A549 (cell line): ENCODE measurements at regions of chr2 and their contacts with region 1.

Region 1: DNA sequence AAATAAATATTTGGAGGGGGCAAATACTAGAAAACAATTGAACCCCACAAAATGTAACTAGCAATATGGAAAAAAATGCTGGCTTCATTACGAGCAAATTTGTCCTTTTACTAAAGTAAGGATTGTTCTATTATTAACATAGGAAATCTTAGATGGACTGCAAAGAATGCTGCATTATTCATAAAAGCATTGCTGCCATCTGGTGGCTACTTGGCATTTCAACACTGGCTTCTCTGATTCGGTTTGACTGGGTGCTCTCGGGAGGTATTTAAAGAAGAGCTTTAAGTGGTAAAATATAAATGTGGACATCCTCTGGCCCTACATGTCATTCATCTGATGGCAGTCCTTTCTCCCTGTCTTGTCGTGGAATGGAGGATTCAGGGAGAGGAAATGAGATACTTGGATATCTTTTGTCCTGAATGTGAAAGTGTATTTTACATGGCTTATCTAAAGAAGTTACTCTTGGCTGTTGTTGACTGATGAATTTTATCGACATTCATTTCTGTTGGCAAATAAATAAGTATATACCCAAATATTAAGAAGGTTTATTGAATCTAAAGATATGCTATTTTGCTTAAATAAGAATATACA is 130.2 kb downstream of the ARHGAP15 start:
- DNase-seq: peak; percentile 13 to 68
- ATAC-seq: peak; percentile 82 to 94
- H3K4me3 ChIP-seq: no peak overlapping the region
- H3K27ac ChIP-seq: no peak overlapping the region
- H3K4me1 ChIP-seq: no peaks in the 10 kb centered on the region
- CTCF ChIP-seq: peak; percentile 86
- EP300 ChIP-seq: no peak
- POLR2A ChIP-seq: no peak
- RAD21 ChIP-seq: peak; percentile 74 to 77

Region 2: DNA sequence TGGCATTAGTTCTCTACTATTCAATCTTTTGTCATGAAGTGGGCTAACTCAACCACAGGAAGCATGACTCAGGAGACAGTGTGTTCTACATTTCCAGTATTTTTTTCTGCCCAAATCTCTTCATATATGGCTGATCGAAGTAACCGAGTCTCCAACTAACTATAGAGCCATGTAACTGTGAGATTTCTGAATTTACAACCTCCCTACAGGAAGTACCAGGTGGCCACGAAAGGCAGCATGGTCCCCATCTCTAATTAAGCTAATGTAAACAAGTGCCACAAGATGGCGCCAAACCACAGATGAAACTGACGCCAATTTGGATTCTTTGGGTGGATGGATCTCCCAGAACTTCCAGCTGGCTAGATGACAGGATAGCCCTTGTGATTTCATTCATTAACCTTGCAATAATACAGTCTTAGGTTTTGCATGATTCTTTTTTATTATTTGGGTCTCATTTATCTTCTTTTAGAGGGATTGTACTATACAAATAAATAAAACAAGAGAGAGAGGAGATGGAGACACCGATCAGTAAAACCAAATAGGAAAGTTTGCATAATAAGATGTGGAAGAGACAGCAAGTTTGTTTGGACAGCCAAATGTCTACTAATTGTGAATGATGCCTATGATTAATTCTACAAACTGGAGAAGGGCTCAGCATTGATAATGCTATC is 148.6 kb before region 1 on chr2:
- CTCF ChIA-PET with region 1: interaction called, 11 read pairs
- POLR2A ChIA-PET with region 1: no interaction called
- DNase-seq: peak; percentile 13 to 66
- ATAC-seq: peak; percentile 74 to 92
- H3K4me3 ChIP-seq: no peak overlapping the region
- H3K27ac ChIP-seq: no peak overlapping the region
- H3K4me1 ChIP-seq: no peaks in the 10 kb centered on the region
- CTCF ChIP-seq: peak; percentile 80
- EP300 ChIP-seq: no peak
- POLR2A ChIP-seq: no peak
- RAD21 ChIP-seq: peak; percentile 71 to 80

Region 3: DNA sequence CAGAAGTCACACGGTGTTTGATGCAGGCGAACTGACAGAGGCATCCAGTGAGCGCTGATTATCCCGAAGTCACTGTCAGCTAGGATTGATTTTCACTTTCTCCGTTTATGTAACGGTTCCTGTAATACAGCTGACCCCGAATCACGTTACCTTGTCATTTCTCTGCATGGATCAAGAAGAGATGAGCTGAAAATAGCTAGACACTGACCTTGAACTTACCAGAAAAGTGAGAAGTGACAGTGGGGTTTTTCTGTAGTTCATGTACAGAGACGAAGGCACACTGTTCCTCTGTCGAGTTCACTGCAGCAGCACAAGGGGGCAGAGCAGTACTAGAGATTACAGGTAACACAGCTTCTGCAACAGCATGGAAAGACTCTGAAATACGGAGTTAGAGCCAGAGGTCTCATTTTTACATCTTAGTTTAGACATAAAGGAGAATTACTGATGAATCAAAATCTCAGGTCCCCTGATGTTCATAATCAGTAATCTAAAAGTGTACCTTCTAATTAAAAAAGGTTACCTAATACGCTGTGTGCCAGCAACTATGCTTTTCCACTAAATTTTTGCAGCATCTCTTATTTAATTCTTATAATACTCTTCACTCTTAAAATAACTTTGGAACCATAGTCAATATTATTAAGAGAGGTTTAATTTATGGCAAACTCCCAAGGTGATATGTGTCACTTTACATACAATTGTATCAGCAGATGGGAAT is 97.2 kb before region 1 on chr2:
- CTCF ChIA-PET with region 1: interaction called, 12 read pairs
- POLR2A ChIA-PET with region 1: no interaction called
- DNase-seq: peak in 1 of 2 experiments; percentile 58
- ATAC-seq: peak; percentile 98 to 99
- H3K4me3 ChIP-seq: no peak overlapping the region
- H3K27ac ChIP-seq: no peak overlapping the region
- H3K4me1 ChIP-seq: no peaks in the 10 kb centered on the region
- CTCF ChIP-seq: peak; percentile 60
- EP300 ChIP-seq: no peak
- POLR2A ChIP-seq: no peak
- RAD21 ChIP-seq: peak; percentile 63 to 68

Region 4: DNA sequence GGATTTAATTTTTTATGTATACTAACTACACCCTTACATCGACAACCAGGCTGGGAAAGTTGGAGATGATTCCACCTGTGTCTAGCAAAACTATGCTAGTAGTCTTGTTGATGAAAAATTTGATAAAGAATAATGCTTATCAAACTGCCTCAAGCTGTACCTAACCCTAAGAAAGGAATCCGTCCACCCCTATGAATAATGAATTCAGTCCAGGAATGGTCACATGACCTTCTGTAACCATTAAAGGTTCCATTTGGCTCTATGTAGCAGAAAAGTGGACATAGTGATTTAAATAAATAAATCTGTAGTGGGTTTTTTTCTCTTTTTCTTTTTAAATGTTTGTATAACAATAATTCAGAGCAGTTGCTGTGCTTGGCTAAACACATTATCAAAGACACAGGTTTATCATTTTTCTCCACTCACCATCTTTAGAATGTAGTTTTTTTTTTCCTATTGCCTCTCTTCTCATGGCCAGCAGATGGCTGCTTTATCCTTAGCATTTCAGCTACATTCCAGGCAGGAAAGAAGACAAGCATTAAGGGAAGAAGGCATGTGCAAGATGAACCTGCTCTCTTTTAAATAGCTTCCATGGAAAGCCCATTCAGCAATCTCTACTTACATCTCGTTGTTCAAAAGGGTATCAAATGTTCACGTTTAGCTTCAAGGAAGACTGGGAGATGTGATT is 87.8 kb before region 1 on chr2:
- CTCF ChIA-PET with region 1: interaction called, 15 read pairs
- POLR2A ChIA-PET with region 1: no interaction called
- DNase-seq: peak in 1 of 2 experiments; percentile 7
- ATAC-seq: peak; percentile 73 to 76; a peak in 5 of 6 replicates
- H3K4me3 ChIP-seq: no peak overlapping the region
- H3K27ac ChIP-seq: no peak overlapping the region
- H3K4me1 ChIP-seq: no peaks in the 10 kb centered on the region
- CTCF ChIP-seq: 0 out of 3 replicates have a peak, but pooled peaks have one; percentile 2
- EP300 ChIP-seq: no peak
- POLR2A ChIP-seq: no peak
- RAD21 ChIP-seq: peak in 1 of 2 experiments; percentile 41; a peak in 2 of 5 replicates

Region 5: DNA sequence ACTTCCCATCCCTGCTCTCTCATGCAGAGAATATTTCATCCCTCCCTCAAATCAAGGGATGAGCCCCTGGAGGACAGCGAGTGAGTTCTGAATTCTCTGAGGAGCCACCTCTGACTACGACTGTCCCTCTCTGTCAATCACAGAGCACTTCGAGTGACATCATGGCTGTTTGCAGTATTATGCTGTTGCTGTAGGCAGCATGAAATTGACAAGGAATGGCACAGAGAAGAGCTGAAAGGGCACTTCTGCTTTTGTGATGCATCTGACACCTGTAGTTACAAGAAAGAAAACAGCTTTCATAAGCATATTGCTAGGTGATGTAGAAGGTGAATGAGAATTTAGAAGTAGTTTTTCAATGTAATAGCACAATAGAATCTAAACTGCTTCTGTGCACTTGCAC is 36.6 kb after region 1 on chr2:
- CTCF ChIA-PET with region 1: no interaction called
- POLR2A ChIA-PET with region 1: no interaction called
- DNase-seq: no peak
- ATAC-seq: no peak
- H3K4me3 ChIP-seq: no peak overlapping the region
- H3K27ac ChIP-seq: no peak overlapping the region
- H3K4me1 ChIP-seq: no peaks in the 10 kb centered on the region
- CTCF ChIP-seq: no peak
- EP300 ChIP-seq: no peak
- POLR2A ChIP-seq: no peak
- RAD21 ChIP-seq: no peak